ENCODE measurements at regions of chr9 and their contacts with region 1.

Region 1: GRCh38 chr9:127214421-127215267 is 49.9 kb upstream of the GARNL3 start:
- DNase-seq: peak; percentile 77
- H3K4me3 ChIP-seq: no peak overlapping the region
- H3K4me3 Mint-ChIP-seq: no peak overlapping the region
- H3K27ac Mint-ChIP-seq: no peak overlapping the region
- H3K4me1 ChIP-seq: peaks cover 3% of the 10 kb centered on the region; the same call in 1 of the 2 replicates
- H3K4me1 Mint-ChIP-seq: peaks cover 14% of the 10 kb centered on the region
- H3K27me3 ChIP-seq: no peaks in the 10 kb centered on the region
- H3K27me3 Mint-ChIP-seq: no peaks in the 10 kb centered on the region
- CTCF ChIP-seq: peak; percentile 85 to 92

Region 2: DNA sequence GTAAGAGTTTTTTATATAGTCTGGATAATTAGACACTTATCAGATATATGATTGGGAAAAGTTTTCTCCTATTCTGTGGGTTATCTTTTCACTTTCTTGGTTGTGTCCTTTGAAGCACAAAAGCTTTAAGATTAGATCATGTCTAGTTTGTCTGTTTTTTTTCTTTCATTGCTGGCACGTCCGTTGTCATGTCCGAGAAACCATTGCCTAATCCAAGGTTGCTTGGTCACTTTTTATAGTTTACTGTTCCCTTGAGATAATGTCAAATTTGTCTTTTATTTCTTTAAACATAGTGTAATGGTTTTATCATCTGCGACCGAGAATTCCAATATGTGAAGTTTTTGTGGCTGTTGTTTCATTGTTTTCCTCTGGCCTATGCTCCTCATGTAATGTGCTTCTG is 78.7 kb after region 1 on chr9:
- CTCF ChIA-PET with region 1: no interaction called
- POLR2A ChIA-PET with region 1: no interaction called
- intact Hi-C with region 1: no loop called
- DNase-seq: no peak
- H3K4me3 ChIP-seq: no peak overlapping the region
- H3K4me3 Mint-ChIP-seq: no peak overlapping the region
- H3K27ac Mint-ChIP-seq: no peak overlapping the region
- H3K4me1 ChIP-seq: no peaks in the 10 kb centered on the region
- H3K4me1 Mint-ChIP-seq: no peaks in the 10 kb centered on the region
- H3K27me3 ChIP-seq: no peaks in the 10 kb centered on the region
- H3K27me3 Mint-ChIP-seq: no peaks in the 10 kb centered on the region
- CTCF ChIP-seq: no peak

Region 3: DNA sequence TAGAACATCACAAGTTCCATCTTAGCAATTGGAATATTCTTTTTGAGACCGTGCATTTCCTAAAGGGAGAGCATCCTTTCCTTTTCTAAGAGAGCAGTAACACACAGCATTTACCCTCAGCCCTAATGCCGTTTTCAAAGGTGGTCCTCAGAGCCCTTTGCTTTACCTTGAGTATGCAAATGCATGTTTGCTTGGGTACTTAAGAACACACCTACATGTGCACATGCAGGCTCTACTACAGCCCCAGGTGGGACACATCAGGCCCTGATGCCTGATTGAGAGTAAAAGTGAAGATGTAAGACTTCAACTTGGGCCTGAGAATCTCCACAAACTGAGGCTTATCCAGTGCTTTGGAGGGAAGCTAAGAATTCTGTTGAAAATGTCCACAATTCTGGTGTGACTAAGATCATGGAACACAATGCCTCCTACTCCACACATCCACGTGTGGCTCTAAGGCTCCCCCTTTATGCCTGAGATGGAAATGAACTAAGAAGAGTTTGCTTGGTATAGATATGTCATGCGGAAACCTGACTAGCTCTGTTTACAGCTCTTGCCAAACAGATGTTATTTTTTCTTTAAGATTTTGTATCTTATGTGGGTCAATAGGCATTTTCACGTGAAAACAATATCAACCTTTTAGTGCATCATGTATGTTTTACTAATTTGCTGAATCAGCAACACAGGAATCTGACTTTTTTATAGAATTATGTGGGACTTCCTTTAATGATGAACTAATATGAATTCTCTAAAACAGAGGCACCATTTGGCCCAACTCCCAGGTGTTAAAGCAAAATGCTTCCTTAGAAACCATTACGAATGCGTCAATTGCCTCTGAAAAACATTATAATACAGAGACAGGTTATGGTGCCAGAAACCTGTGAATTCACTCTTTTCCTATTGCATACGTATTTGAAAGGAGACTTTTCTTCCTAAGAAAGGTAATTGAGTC is 133.5 kb after region 1 on chr9:
- CTCF ChIA-PET with region 1: interaction called, 4 read pairs
- POLR2A ChIA-PET with region 1: no interaction called
- intact Hi-C with region 1: loop called (anchors 1 kb)
- DNase-seq: no peak
- H3K4me3 ChIP-seq: no peak overlapping the region
- H3K4me3 Mint-ChIP-seq: no peak overlapping the region
- H3K27ac Mint-ChIP-seq: no peak overlapping the region
- H3K4me1 ChIP-seq: no peaks in the 10 kb centered on the region
- H3K4me1 Mint-ChIP-seq: peaks cover 6% of the 10 kb centered on the region
- H3K27me3 ChIP-seq: no peaks in the 10 kb centered on the region
- H3K27me3 Mint-ChIP-seq: no peaks in the 10 kb centered on the region
- CTCF ChIP-seq: peak; percentile 8 to 12

Region 4: DNA sequence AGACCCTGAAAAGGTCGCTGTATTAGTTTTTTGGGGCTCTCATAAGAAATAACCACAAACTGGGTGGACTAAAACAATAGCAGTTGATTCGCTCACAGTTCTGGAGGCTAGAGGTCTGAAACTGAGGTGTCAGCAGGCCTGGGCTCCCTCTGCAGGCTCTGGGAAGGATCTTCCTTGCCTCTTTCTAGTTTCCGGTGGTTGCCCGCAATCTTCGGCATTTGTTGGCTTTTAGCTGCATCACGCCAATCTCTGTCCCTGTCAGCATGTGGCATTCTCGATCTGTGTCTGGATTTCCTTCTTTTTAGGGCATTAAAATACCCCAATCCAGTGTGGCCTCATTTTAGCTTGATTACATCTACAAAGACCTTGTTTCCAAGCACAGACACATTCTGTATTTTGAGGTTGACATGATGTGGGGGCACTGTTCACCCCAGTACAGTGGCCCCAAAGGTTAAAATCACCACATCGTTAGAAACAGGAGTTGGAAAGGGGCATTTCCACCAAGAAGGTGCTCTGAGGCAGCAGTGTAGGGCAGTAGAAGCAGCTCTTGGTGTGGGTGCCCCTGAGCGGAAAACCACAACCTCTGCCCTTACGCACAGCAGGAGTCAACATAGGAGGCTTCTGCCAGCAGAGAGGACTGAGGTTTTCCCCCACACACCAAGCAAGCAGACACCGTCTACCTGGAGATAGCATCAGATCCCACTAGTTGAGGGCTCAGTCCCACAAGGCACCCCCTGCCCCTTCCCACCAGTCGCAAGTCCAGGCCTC is 223.0 kb after region 1 on chr9:
- CTCF ChIA-PET with region 1: no interaction called
- POLR2A ChIA-PET with region 1: no interaction called
- intact Hi-C with region 1: loop called (anchors 1 kb)
- DNase-seq: no peak
- H3K4me3 ChIP-seq: no peak overlapping the region
- H3K4me3 Mint-ChIP-seq: no peak overlapping the region
- H3K27ac Mint-ChIP-seq: no peak overlapping the region
- H3K4me1 ChIP-seq: peaks cover 12% of the 10 kb centered on the region; the same call in 1 of the 2 replicates
- H3K4me1 Mint-ChIP-seq: peaks cover 14% of the 10 kb centered on the region
- H3K27me3 ChIP-seq: no peaks in the 10 kb centered on the region
- H3K27me3 Mint-ChIP-seq: no peaks in the 10 kb centered on the region
- CTCF ChIP-seq: peak; percentile 28 to 38

Measured in Caco-2 (cell line).